Heart right ventricle (tissue), 16 donors: ENCODE measurements at regions of chr2 and their contacts with region 1.

Region 1: DNA sequence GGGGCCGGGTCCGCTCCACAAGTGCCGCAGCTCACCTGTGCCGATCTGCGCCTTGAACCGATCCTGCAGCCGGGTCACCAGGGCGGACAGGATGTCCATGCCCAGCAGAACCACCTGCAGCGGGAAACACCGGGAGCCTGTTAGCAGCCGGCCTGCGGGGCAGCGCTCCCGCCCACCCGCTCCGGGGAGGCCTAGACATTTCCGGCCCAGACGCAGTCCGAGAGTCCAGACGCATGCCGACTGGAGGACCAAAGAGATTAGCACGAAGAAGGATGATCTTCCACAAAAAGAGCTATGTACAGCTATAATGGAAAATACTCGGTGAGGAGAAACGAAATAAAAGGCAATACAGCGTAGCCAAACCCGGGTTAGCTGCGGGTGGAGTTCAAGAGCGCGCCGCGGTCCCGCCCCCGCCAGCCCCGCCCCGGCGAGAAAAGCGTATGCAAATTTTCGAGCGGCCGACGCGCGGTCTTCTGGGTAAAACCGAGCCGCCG is 421 bp upstream of the RNU4ATAC start:
- DNase-seq: peak; percentile 82 to 83
- ATAC-seq: peak; percentile 83 to 92 (median 86)
- H3K4me3 ChIP-seq: peak overlapping the region; percentile 61 to 84 (median 73)
- H3K27ac ChIP-seq: peak overlapping the region; percentile 95 to 99 (median 96)
- H3K4me1 ChIP-seq: peaks cover 4 to 86% (median 61%) of the 10 kb centered on the region in 9 donors
- H3K27me3 ChIP-seq: no peaks in the 10 kb centered on the region
- CTCF ChIP-seq: no peak

Region 2: GRCh38 chr2:121400201-121400600 is 130.1 kb before region 1 on chr2:
- intact Hi-C with region 1: loop called in 1 of 10 experiments (anchors 10 kb)
- DNase-seq: no peak
- ATAC-seq: no peak
- H3K4me3 ChIP-seq: no peak overlapping the region
- H3K27ac ChIP-seq: no peak overlapping the region
- H3K4me1 ChIP-seq: no peaks in the 10 kb centered on the region
- H3K27me3 ChIP-seq: no peaks in the 10 kb centered on the region
- CTCF ChIP-seq: no peak

Region 3: GRCh38 chr2:121596221-121597080 is 66.2 kb after region 1 on chr2:
- intact Hi-C with region 1: loop called in 5 of 10 experiments (anchors 5 kb)
- DNase-seq: peak in 1 of 2 donors; percentile 47
- ATAC-seq: peak; percentile 49 to 81 (median 76)
- H3K4me3 ChIP-seq: peak overlapping the region in 6 of 10 donors; percentile 5 to 38 (median 16)
- H3K27ac ChIP-seq: peak overlapping the region; percentile 2 to 85 (median 62)
- H3K4me1 ChIP-seq: peaks cover 2 to 55% (median 37%) of the 10 kb centered on the region in 9 donors
- H3K27me3 ChIP-seq: no peaks in the 10 kb centered on the region
- CTCF ChIP-seq: peak; percentile 22 to 76 (median 54)

Region 4: DNA sequence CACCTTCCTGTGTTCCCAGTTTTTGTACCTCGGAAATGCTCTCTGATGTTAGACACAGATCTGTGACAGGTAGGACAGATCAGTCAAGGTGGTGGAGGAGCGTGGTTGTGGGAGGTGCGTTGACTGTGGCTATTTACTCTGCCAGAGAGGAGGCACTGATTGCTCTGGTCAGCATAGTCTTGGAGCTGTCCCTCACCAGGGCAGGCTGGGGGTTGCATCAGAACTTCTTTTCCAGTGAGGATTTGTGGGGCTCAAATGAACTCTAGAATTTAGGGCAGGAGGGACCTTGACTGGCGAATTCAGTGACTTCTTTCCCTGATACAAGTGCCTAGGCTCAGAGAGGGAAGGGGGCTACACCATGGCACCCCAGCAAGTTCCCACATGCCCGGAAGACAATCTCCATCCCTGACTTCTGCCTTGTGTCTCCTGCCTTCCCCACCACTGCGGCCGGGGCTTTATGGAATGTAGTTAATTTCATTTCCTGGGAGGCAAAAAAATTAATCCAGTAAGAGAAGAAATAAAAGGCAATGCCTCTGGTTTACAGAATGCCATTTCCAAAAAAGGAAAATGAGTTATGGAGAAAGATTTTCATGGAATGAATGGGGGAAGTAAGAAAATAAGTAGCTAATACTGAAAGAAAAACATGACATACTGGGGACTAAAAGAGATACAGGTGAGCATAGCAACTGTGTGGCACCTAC is 180.4 kb after region 1 on chr2:
- intact Hi-C with region 1: loop called in 7 of 10 experiments (anchors 5 to 10 kb)
- DNase-seq: no peak
- ATAC-seq: no peak
- H3K4me3 ChIP-seq: no peak overlapping the region
- H3K27ac ChIP-seq: no peak overlapping the region
- H3K4me1 ChIP-seq: peaks cover 0 to 1% (median 0%) of the 10 kb centered on the region in 9 donors
- H3K27me3 ChIP-seq: no peaks in the 10 kb centered on the region
- CTCF ChIP-seq: no peak

Region 5: GRCh38 chr2:121736462-121737341 is 206.4 kb after region 1 on chr2 and contains the start of gene NIFK:
- intact Hi-C with region 1: loop called in 2 of 10 experiments (anchors 1 to 5 kb)
- DNase-seq: peak; percentile 99 to 100
- ATAC-seq: peak; percentile 97 to 99 (median 99)
- H3K4me3 ChIP-seq: peak within 1 kb of the TSS; percentile 68 to 99 (median 75)
- H3K27ac ChIP-seq: peak within 1 kb of the TSS; percentile 30 to 93 (median 80)
- H3K4me1 ChIP-seq: peaks cover 0 to 21% (median 15%) of the 10 kb centered on the region in 9 donors
- H3K27me3 ChIP-seq: no peaks in the 10 kb centered on the region
- CTCF ChIP-seq: peak in 1 of 9 donors; percentile 10
- total RNA-seq, gene NIFK: 20.8 to 29.7 (median 24.7) TPM